ENCODE measurements at regions of chr6 and their contacts with region 1.

Region 1: DNA sequence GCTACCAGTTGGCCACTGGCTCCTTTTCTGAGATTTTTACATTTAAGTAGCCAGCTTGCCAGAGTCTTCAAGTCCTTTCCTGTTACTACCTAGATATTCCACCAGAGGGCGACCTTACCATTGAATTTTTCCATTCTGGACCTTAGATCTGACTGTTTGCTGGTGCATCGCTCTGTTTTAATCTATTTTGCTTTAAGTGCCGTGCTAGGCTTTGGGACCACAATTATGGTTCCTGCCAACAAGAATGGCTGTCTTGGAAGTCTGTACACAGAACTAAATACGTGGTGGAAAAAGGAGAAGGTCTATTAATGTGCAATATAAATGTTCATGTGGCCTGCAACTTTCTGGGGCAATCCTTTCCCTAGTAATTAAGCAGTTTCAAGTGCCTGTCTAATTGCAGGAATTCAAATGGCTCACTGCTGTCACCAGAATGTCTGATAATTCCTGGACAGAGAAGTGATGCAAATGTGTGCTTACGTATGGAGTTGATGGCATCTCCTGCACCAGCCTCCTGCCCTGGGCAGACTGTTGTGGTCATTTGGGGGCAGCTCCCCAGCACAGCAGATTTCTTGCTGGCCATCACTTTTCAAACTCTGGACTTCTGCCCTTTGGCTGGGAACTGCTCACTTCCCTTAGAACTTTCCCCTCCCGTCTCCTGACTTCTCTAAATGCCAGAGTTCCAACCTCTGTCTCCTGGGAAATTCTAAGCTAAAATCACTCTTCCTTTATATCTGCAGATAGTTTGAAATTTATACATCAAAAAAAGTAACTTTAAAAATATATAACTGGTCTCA is 5.6 kb upstream of the HLA-DOA start:
- DNase-seq: peak; percentile 68 to 75
- H3K4me3 ChIP-seq: no peak overlapping the region
- H3K4me1 ChIP-seq: no peaks in the 10 kb centered on the region
- H3K27me3 ChIP-seq: peaks cover 79% of the 10 kb centered on the region

Region 2: GRCh38 chr6:33082702-33083101 is 67.7 kb after region 1 on chr6:
- in situ Hi-C with region 1: loop called (anchors 10 kb)
- DNase-seq: peak in 1 of 2 experiments; percentile 47
- H3K4me3 ChIP-seq: no peak overlapping the region
- H3K4me1 ChIP-seq: no peaks in the 10 kb centered on the region
- H3K27me3 ChIP-seq: peaks cover 16% of the 10 kb centered on the region

Region 3: GRCh38 chr6:33248925-33249731 is 234.1 kb after region 1 on chr6:
- in situ Hi-C with region 1: loop called (anchors 10 kb)
- DNase-seq: peak; percentile 99 to 100
- H3K4me3 ChIP-seq: peak overlapping the region; percentile 37
- H3K4me1 ChIP-seq: peaks cover 16% of the 10 kb centered on the region
- H3K27me3 ChIP-seq: no peaks in the 10 kb centered on the region

Measured in HAP-1 (cell line).